Activated B cell treated with CpG ODN at 0.5 μM for 24 hours (primary cell): ENCODE measurements at regions of chr17 and their contacts with region 1.

Region 1: DNA sequence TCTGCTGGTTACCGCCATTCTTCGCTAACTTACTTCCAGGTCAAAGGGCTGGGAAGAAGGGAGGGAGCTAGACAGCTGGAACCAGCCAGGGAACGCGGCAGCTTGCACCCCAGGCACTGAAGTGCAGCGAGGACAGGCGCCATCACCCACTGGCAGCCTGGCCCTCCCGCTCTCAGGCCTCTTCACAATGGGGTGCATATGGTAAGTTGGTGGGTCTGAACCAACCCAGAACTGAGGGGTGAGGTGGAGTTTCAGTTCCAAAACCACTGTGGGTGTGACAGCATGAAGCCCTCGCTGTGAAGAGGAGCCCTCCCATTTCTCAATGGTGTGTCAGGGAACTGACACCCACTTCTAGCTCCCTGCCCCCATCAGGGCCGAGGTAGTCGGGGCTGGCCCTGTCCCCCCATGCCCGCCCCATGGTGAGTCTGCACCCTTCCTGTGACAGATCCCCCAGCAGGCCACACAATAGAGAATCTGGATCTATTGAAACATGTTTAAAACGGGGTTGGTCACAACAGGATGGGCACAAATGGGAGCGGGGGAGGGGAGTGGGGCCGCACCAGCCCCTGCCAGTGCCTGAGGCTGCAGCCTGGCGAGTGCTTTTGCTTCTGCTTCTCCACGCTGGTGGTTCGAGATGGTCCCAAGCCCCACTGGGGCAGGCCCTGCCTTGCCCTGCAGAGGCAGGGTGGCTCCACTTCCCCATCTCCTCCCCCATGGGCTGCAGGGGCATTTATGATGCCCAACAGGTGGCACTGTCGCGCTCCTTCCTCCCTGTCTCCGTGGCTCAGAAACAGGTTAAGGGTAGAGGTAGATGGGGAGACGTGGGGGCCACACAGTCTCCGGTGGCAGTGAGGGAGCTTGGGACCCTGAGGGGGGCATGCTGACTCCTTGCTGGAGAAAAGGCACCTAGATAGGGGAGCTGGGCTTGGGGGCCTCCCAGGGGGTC is 2.3 kb downstream of the LIMD2 start:
- DNase-seq: peak; percentile 78
- ATAC-seq: peak; percentile 52
- H3K4me3 Mint-ChIP-seq: peak overlapping the region; percentile 96
- H3K27ac Mint-ChIP-seq: peak overlapping the region; percentile 97
- H3K4me1 Mint-ChIP-seq: peaks cover 70% of the 10 kb centered on the region
- H3K27me3 Mint-ChIP-seq: no peaks in the 10 kb centered on the region
- CTCF ChIP-seq: no peak

Region 2: DNA sequence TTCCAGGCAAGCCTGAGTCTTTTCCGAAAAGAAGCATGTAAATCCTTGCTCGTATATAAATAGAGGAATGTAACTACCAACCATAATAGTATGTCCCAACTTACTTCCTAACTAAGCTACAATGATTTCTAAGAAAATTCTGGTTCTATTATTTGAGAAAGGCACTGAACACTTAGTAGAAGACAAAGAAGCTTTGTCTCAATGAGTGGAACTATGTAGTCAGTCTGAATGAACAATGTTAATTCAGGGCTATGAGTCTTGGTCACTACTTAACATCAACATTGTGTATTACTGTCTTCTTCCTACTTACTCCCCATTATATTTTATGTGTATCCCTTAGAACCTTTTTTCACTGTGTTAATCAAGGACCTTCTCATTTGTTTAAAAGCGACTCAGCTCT is 457.5 kb before region 1 on chr17:
- CTCF ChIA-PET with region 1: no interaction called
- POLR2A ChIA-PET with region 1: no interaction called
- intact Hi-C with region 1: no loop called
- DNase-seq: no peak
- ATAC-seq: no peak
- H3K4me3 Mint-ChIP-seq: no peak overlapping the region
- H3K27ac Mint-ChIP-seq: no peak overlapping the region
- H3K4me1 Mint-ChIP-seq: no peaks in the 10 kb centered on the region
- H3K27me3 Mint-ChIP-seq: peaks cover 4% of the 10 kb centered on the region
- CTCF ChIP-seq: no peak

Region 3: DNA sequence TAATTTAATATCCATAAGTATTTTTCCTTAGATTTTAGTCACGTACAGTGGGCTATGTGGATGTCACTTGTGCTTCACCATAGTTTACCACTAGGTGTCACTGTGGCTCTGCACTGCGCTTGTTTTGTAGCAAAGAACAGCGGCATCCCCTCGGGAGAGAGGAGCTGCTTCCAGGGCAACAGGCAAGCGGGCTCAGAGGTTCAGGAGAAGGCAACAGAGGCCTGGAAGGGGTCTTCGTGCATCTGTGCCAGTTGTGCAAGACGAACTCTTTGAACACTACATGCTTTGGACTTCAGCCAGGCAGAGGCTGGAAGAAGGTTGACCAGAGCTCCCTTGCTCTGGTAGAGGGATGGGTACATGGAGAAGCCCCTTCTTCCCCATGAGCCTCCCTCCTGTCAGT is 272.1 kb before region 1 on chr17:
- CTCF ChIA-PET with region 1: no interaction called
- POLR2A ChIA-PET with region 1: no interaction called
- intact Hi-C with region 1: loop called (anchors 1 kb)
- DNase-seq: peak; percentile 56
- ATAC-seq: peak; percentile 86
- H3K4me3 Mint-ChIP-seq: no peak overlapping the region
- H3K27ac Mint-ChIP-seq: no peak overlapping the region
- H3K4me1 Mint-ChIP-seq: peaks cover 8% of the 10 kb centered on the region
- H3K27me3 Mint-ChIP-seq: peaks cover 2% of the 10 kb centered on the region
- CTCF ChIP-seq: peak; percentile 96

Region 4: GRCh38 chr17:63549946-63550807 is 147.4 kb before region 1 on chr17 and contains the start of gene DCAF7:
- CTCF ChIA-PET with region 1: no interaction called
- POLR2A ChIA-PET with region 1: interaction called, 5 read pairs
- intact Hi-C with region 1: loop called (anchors 1 kb)
- DNase-seq: peak; percentile 94
- ATAC-seq: peak; percentile 94
- H3K4me3 Mint-ChIP-seq: peak within 1 kb of the TSS; percentile 99
- H3K27ac Mint-ChIP-seq: peak within 1 kb of the TSS; percentile 95
- H3K4me1 Mint-ChIP-seq: peaks cover 56% of the 10 kb centered on the region
- H3K27me3 Mint-ChIP-seq: no peaks in the 10 kb centered on the region
- CTCF ChIP-seq: no peak
- total RNA-seq, gene DCAF7: 91.9 and 103 TPM in 2 replicates

Region 5: GRCh38 chr17:63665527-63666214 is 31.9 kb before region 1 on chr17:
- CTCF ChIA-PET with region 1: interaction called, 5 read pairs
- POLR2A ChIA-PET with region 1: interaction called, 32 read pairs
- intact Hi-C with region 1: no loop called
- DNase-seq: no peak
- ATAC-seq: peak; percentile 71
- H3K4me3 Mint-ChIP-seq: peak overlapping the region; percentile 68
- H3K27ac Mint-ChIP-seq: peak overlapping the region; percentile 95
- H3K4me1 Mint-ChIP-seq: peaks cover 44% of the 10 kb centered on the region
- H3K27me3 Mint-ChIP-seq: no peaks in the 10 kb centered on the region
- CTCF ChIP-seq: no peak

Region 6: GRCh38 chr17:63760771-63761539 is 63.3 kb after region 1 on chr17:
- CTCF ChIA-PET with region 1: no interaction called
- POLR2A ChIA-PET with region 1: interaction called, 13 read pairs
- intact Hi-C with region 1: no loop called
- DNase-seq: no peak
- ATAC-seq: peak; percentile 60
- H3K4me3 Mint-ChIP-seq: peak overlapping the region; percentile 0
- H3K27ac Mint-ChIP-seq: peak overlapping the region; percentile 32
- H3K4me1 Mint-ChIP-seq: peaks cover 21% of the 10 kb centered on the region
- H3K27me3 Mint-ChIP-seq: no peaks in the 10 kb centered on the region
- CTCF ChIP-seq: no peak

Region 7: GRCh38 chr17:63827002-63827771 is 129.6 kb after region 1 on chr17 and contains the starts of genes FTSJ3 and PSMC5:
- CTCF ChIA-PET with region 1: interaction called, 4 read pairs
- POLR2A ChIA-PET with region 1: interaction called, 13 read pairs
- intact Hi-C with region 1: loop called (anchors 1 kb)
- DNase-seq: peak; percentile 90
- ATAC-seq: peak; percentile 95
- H3K4me3 Mint-ChIP-seq: peak within 1 kb of the TSS; percentile 98
- H3K27ac Mint-ChIP-seq: peak within 1 kb of the TSS; percentile 100
- H3K4me1 Mint-ChIP-seq: peaks cover 75% of the 10 kb centered on the region
- H3K27me3 Mint-ChIP-seq: no peaks in the 10 kb centered on the region
- CTCF ChIP-seq: no peak
- total RNA-seq, gene FTSJ3: 82.0 and 85.1 TPM in 2 replicates
- total RNA-seq, gene PSMC5: 157 TPM in 2 replicates